ENCODE measurements at regions of chr1 and their contacts with region 1.

Region 1: DNA sequence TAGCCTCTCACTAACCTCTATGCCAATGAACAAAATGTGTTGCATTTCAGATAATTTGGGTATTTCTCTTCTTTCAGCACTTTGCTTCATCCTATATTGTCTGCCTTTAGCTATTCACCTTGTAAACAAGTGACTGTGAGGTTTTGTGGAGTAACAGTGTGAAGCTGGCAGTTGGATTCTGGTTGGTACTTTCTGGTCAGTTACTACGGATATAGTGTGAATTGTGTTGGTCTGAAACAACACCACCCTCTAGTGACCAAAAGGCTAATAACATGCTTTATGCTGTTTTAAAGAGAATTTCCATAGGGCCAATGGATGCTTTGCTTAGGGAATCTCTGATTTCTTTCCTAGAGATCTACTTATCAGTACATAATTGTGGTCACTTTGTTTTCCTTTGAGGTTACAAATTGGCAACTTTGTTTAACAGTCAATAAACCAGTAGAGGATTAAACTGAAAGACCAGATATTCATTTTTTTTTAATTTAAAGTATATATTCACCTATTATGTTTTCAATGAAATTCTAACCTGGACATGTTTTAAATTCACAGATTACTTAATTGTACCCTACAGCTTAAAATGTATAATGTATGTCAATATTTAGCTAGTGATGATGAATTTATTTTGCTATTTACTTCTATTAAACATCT is 2.5 kb upstream of the PTGER3 start:
- DNase-seq: peak; percentile 82
- H3K4me3 Mint-ChIP-seq: no peak overlapping the region
- H3K27ac Mint-ChIP-seq: no peak overlapping the region
- H3K4me1 Mint-ChIP-seq: peaks cover 16% of the 10 kb centered on the region
- H3K27me3 Mint-ChIP-seq: peaks cover 45% of the 10 kb centered on the region

Region 2: GRCh38 chr1:70528590-70529333 is 521.3 kb before region 1 on chr1:
- intact Hi-C with region 1: loop called (anchors 1 kb)
- DNase-seq: peak; percentile 61
- H3K4me3 Mint-ChIP-seq: no peak overlapping the region
- H3K27ac Mint-ChIP-seq: no peak overlapping the region
- H3K4me1 Mint-ChIP-seq: peaks cover 2% of the 10 kb centered on the region
- H3K27me3 Mint-ChIP-seq: peaks cover 28% of the 10 kb centered on the region

Region 3: DNA sequence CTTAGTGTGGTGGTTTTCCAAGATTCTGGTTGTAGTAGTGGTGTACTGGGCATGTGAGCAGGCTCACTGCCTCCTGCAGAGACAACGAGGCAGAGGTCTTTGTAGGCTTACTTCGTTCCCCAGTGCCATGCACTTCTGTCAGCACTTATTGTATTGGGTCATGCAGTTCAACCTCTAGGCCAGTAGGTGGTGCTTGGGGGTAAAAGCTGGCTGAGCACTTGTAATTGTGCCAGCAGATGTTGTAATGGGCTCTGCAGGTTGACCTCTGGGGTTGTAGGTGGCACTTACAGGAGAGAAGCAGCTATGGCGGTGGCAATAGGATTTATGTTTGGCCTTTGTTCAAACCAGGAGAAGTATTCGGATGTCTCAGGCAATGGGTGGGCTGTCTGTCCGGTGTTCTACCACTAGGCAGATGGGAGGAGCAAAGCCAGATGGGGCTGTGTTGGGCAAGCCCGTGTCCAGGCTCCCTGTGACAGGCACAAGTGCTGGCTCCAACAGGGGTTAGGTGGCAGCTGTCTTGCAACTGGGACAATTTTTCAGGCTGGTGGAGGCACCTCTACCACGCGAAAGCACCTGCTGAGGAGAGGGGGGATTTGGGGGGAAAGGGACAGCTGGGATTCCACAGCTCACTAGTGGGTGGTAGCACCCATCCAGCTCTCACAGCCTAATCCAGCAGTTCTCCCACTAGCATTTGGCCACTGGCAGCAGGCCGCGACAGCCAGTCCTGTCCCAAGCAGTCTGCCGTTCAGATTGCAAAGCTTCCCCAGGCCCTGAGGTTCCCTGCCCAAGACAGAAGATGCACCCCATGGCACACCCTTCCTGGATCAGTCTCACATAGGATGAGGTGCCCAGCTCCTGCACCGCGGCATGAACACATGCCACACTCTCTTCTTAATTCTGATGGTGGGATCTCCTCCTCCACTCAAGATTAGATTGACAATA is 364.5 kb before region 1 on chr1:
- intact Hi-C with region 1: loop called (anchors 1 kb)
- DNase-seq: peak; percentile 84
- H3K4me3 Mint-ChIP-seq: no peak overlapping the region
- H3K27ac Mint-ChIP-seq: no peak overlapping the region
- H3K4me1 Mint-ChIP-seq: peaks cover 2% of the 10 kb centered on the region
- H3K27me3 Mint-ChIP-seq: peaks cover 5% of the 10 kb centered on the region

Region 4: DNA sequence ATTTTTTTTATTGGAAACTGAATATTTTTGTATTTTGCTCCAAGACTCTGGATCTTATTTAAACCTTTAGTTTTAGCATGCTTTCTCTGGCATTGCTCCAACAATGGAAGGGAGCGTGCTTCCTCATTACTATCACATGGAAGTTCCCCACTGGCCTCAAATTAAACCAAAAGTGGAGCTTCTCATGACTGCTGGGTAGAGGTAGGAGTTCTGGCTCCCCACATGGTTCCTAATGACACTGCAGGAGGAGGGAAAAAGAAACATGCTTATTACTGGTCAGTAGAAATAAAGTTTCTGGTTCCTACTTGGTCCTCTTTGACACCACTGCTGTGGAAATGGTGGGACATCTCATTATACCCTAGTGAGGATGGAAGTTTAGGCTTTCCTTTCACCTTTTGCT is 312.9 kb before region 1 on chr1:
- intact Hi-C with region 1: no loop called
- DNase-seq: no peak
- H3K4me3 Mint-ChIP-seq: no peak overlapping the region
- H3K27ac Mint-ChIP-seq: no peak overlapping the region
- H3K4me1 Mint-ChIP-seq: no peaks in the 10 kb centered on the region
- H3K27me3 Mint-ChIP-seq: no peaks in the 10 kb centered on the region